ENCODE measurements at regions of chr17 and their contacts with region 1.

Region 1: DNA sequence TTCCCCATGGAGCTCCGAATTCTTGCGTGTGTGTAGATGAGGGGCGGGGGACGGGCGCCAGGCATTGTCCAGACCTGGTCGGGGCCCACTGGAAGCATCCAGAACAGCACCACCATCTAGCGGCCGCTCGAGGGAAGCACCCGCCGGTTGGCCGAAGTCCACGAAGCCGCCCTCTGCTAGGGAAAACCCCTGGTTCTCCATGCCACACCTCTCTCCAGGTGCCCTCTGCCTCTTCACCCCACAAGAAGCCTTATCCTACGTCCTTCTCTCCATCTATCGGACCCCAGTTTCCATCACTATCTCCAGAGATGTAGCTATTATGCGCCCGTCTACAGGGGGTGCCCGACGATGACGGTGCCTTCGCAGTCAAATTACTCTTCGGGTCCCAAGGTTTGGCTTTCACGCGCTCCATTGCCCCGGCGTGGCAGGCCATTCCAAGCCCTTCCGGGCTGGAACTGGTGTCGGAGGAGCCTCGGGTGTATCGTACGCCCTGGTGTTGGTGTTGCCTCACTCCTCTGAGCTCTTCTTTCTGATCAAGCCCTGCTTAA is 617 bp upstream of the SENP3 start:
- DNase-seq: peak; percentile 88
- H3K4me3 ChIP-seq: peak overlapping the region; percentile 94
- H3K27ac ChIP-seq: peak overlapping the region; percentile 80
- H3K4me1 ChIP-seq: peaks cover 47% of the 10 kb centered on the region
- CTCF ChIP-seq: peak; percentile 74

Region 2: DNA sequence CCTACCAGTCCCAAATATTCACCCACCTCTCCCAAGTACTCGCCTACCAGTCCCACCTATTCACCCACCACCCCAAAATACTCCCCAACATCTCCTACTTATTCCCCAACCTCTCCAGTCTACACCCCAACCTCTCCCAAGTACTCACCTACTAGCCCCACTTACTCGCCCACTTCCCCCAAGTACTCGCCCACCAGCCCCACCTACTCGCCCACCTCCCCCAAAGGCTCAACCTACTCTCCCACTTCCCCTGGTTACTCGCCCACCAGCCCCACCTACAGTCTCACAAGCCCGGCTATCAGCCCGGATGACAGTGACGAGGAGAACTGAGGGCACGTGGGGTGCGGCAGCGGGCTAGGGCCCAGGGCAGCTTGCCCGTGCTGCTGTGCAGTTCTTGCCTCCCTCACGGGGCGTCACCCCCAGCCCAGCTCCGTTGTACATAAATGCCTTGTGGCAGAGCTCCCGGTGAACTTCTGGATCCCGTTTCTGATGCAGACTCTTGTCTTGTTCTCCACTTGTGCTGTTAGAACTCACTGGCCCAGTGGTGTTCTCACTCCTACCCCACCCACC is 47.2 kb before region 1 on chr17:
- CTCF ChIA-PET with region 1: interaction called, 18 read pairs
- POLR2A ChIA-PET with region 1: interaction called, 6 read pairs
- intact Hi-C with region 1: loop called (anchors 1 kb)
- DNase-seq: no peak
- H3K4me3 ChIP-seq: no peak overlapping the region
- H3K27ac ChIP-seq: no peak overlapping the region
- H3K4me1 ChIP-seq: no peaks in the 10 kb centered on the region
- CTCF ChIP-seq: no peak

Measured in OCI-LY7 (cell line).